CD8-positive, alpha-beta memory T cell (primary cell): ENCODE measurements at regions of chr12 and their contacts with region 1.

Region 1: GRCh38 chr12:8949342-8950220 is at the start of gene M6PR:
- DNase-seq: peak; percentile 81 to 93 (median 88)
- H3K4me3 ChIP-seq: peak within 1 kb of the TSS; percentile 97
- H3K4me3 Mint-ChIP-seq: peak within 1 kb of the TSS; percentile 90 to 98 (median 93)
- H3K27ac ChIP-seq: peak within 1 kb of the TSS; percentile 97
- H3K27ac Mint-ChIP-seq: peak within 1 kb of the TSS; percentile 90 to 99 (median 96)
- H3K4me1 ChIP-seq: peaks cover 61% of the 10 kb centered on the region
- H3K4me1 Mint-ChIP-seq: peaks cover 65 to 80% (median 70%) of the 10 kb centered on the region in 3 donors
- H3K27me3 ChIP-seq: no peaks in the 10 kb centered on the region
- H3K27me3 Mint-ChIP-seq: no peaks in the 10 kb centered on the region
- total RNA-seq, gene M6PR: 226 to 248 TPM

Region 2: GRCh38 chr12:8914716-8915526 is 34.7 kb before region 1 on chr12:
- CTCF ChIA-PET with region 1: interaction called, 10 read pairs
- POLR2A ChIA-PET with region 1: interaction called, 3 read pairs
- DNase-seq: peak; percentile 50 to 77 (median 66)
- H3K4me3 ChIP-seq: peak overlapping the region; percentile 90
- H3K4me3 Mint-ChIP-seq: no peak overlapping the region
- H3K27ac ChIP-seq: peak overlapping the region; percentile 34
- H3K27ac Mint-ChIP-seq: no peak overlapping the region
- H3K4me1 ChIP-seq: peaks cover 28% of the 10 kb centered on the region
- H3K4me1 Mint-ChIP-seq: peaks cover 7 to 20% (median 14%) of the 10 kb centered on the region in 3 donors
- H3K27me3 ChIP-seq: no peaks in the 10 kb centered on the region
- H3K27me3 Mint-ChIP-seq: no peaks in the 10 kb centered on the region

Region 3: DNA sequence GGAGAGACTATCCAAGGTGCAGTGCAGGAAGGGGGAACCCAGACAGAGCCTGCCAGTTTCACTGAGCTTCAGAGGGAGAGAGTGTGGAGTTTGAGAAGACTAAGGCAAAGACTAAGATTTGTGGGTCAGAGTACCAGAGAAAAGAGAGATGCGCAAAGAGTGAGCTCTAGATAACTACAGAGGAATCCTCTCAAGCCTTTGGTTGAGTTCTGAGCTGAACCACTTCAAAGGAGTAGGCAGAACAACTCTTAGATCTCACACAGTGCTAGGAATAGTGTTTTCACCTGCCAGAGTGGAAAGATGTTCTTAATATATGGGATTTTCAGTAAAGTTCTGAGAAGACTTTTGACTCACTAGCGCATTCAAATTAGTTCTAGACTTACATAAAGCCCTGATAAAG is 10.6 kb after region 1 on chr12:
- CTCF ChIA-PET with region 1: interaction called, 34 read pairs
- POLR2A ChIA-PET with region 1: interaction called, 11 read pairs
- DNase-seq: peak in 2 of 5 donors; percentile 25 to 50
- H3K4me3 ChIP-seq: peak overlapping the region; percentile 20
- H3K4me3 Mint-ChIP-seq: peak overlapping the region in 6 of 7 donors; percentile 13 to 88 (median 44)
- H3K27ac ChIP-seq: no peak overlapping the region
- H3K27ac Mint-ChIP-seq: peak overlapping the region; percentile 68 to 92 (median 80)
- H3K4me1 ChIP-seq: peaks cover 74% of the 10 kb centered on the region
- H3K4me1 Mint-ChIP-seq: peaks cover 73 to 80% (median 73%) of the 10 kb centered on the region in 3 donors
- H3K27me3 ChIP-seq: no peaks in the 10 kb centered on the region
- H3K27me3 Mint-ChIP-seq: no peaks in the 10 kb centered on the region

Region 4: GRCh38 chr12:8996682-8997360 is 47.2 kb after region 1 on chr12:
- CTCF ChIA-PET with region 1: interaction called, 14 read pairs
- POLR2A ChIA-PET with region 1: interaction called, 5 read pairs
- DNase-seq: no peak
- H3K4me3 ChIP-seq: peak overlapping the region; percentile 30
- H3K4me3 Mint-ChIP-seq: peak overlapping the region; percentile 86 to 97 (median 95)
- H3K27ac ChIP-seq: peak overlapping the region; percentile 7
- H3K27ac Mint-ChIP-seq: peak overlapping the region; percentile 52 to 97 (median 87)
- H3K4me1 ChIP-seq: peaks cover 76% of the 10 kb centered on the region
- H3K4me1 Mint-ChIP-seq: peaks cover 69 to 83% (median 82%) of the 10 kb centered on the region in 3 donors
- H3K27me3 ChIP-seq: no peaks in the 10 kb centered on the region
- H3K27me3 Mint-ChIP-seq: no peaks in the 10 kb centered on the region

Region 5: DNA sequence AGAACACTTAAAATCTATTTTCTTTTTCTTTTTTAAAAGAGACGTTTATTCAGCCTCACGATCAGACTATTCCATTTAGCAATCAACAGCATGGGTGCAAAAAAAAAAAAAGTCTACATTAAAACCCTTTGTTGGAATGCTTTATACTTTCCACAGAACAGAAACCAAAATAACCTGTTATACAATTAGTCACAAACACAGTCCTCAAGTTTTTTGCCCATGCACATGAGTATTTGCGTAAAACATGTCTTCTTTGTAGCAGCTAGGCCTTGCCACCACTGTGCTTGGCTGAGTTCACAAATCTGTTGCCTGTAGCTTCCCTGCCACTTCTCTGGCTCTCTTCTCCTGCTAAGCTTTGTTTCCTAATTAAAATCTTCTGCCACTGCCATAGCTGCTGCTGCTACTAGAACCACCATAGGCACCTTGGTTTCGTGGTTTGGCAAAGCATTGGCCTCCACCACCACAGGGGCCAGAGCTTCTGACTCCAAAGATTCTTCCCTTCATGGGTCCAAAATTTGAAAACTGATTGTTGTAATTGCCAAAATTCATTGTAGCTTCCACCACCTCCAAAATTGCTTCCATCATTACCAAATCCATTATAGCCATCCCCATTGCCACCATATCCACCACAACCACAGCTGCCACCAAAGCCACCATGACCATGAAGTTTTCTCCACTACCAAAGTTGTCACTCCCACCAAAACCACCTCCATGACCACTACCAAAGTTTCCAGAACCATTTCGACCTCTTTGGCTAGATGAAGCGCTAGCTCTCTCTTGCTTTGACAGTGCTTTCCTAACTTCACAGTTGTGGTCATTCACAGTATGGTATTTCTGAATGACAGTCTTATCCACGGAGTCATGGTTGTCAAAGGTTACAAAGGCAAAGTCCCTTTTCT is 77.8 kb after region 1 on chr12:
- CTCF ChIA-PET with region 1: interaction called, 192 read pairs
- POLR2A ChIA-PET with region 1: interaction called, 24 read pairs
- DNase-seq: peak in 3 of 5 donors; percentile 14 to 51 (median 17)
- H3K4me3 ChIP-seq: no peak overlapping the region
- H3K4me3 Mint-ChIP-seq: peak overlapping the region in 6 of 7 donors; percentile 51 to 83 (median 63)
- H3K27ac ChIP-seq: no peak overlapping the region
- H3K27ac Mint-ChIP-seq: peak overlapping the region in 7 of 8 donors; percentile 75 to 96 (median 90)
- H3K4me1 ChIP-seq: peaks cover 81% of the 10 kb centered on the region
- H3K4me1 Mint-ChIP-seq: peaks cover 44 to 62% (median 61%) of the 10 kb centered on the region in 3 donors
- H3K27me3 ChIP-seq: no peaks in the 10 kb centered on the region
- H3K27me3 Mint-ChIP-seq: peaks cover 0 to 2% of the 10 kb centered on the region in 2 donors

Region 6: GRCh38 chr12:9039397-9039977 is 89.9 kb after region 1 on chr12:
- CTCF ChIA-PET with region 1: interaction called, 192 read pairs
- POLR2A ChIA-PET with region 1: interaction called, 27 read pairs
- DNase-seq: peak in 2 of 5 donors; percentile 61 to 64
- H3K4me3 ChIP-seq: no peak overlapping the region
- H3K4me3 Mint-ChIP-seq: peak overlapping the region; percentile 2 to 49 (median 4)
- H3K27ac ChIP-seq: no peak overlapping the region
- H3K27ac Mint-ChIP-seq: peak overlapping the region; percentile 2 to 86 (median 52)
- H3K4me1 ChIP-seq: peaks cover 43% of the 10 kb centered on the region
- H3K4me1 Mint-ChIP-seq: peaks cover 57 to 83% (median 81%) of the 10 kb centered on the region in 3 donors
- H3K27me3 ChIP-seq: no peaks in the 10 kb centered on the region
- H3K27me3 Mint-ChIP-seq: no peaks in the 10 kb centered on the region

Region 7: DNA sequence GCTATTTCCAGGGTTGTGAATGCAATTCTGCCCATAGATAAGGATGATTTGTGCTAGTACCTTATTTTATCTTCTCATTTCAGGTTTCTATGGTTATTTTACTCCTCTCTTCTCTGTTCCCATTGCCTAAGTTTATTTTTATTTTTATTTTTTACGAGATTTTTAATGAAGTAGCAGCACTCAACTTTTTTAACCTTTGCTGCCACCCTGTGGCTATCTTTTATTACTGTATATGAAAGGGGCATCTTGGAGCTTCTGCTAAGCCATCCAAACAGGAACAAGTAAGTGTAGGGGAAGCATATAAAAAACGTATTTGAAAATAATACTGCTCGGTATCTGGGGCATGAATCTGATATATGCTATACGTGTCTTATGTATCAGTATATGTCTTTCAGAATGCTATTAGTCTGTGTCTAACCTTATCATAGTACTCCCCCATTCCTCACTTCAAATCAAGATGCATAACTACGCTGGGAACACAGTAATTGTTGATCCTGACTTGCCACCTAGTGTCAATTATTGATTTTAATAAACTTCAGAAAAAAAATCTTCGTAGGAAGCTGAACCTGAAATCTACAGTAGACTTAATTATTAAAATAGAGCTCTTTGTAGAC is 100.0 kb after region 1 on chr12:
- CTCF ChIA-PET with region 1: interaction called, 132 read pairs
- POLR2A ChIA-PET with region 1: interaction called, 5 read pairs
- DNase-seq: peak in 2 of 5 donors; percentile 44 to 48
- H3K4me3 ChIP-seq: no peak overlapping the region
- H3K4me3 Mint-ChIP-seq: peak overlapping the region in 2 of 7 donors; percentile 24 to 74
- H3K27ac ChIP-seq: no peak overlapping the region
- H3K27ac Mint-ChIP-seq: peak overlapping the region in 7 of 8 donors; percentile 50 to 93 (median 82)
- H3K4me1 ChIP-seq: peaks cover 17% of the 10 kb centered on the region
- H3K4me1 Mint-ChIP-seq: peaks cover 39 to 60% (median 39%) of the 10 kb centered on the region in 3 donors
- H3K27me3 ChIP-seq: no peaks in the 10 kb centered on the region
- H3K27me3 Mint-ChIP-seq: peaks cover 0 to 2% of the 10 kb centered on the region in 2 donors